Transverse colon (tissue), 4 donors: ENCODE measurements at regions of chr11 and their contacts with region 1.

Region 1: DNA sequence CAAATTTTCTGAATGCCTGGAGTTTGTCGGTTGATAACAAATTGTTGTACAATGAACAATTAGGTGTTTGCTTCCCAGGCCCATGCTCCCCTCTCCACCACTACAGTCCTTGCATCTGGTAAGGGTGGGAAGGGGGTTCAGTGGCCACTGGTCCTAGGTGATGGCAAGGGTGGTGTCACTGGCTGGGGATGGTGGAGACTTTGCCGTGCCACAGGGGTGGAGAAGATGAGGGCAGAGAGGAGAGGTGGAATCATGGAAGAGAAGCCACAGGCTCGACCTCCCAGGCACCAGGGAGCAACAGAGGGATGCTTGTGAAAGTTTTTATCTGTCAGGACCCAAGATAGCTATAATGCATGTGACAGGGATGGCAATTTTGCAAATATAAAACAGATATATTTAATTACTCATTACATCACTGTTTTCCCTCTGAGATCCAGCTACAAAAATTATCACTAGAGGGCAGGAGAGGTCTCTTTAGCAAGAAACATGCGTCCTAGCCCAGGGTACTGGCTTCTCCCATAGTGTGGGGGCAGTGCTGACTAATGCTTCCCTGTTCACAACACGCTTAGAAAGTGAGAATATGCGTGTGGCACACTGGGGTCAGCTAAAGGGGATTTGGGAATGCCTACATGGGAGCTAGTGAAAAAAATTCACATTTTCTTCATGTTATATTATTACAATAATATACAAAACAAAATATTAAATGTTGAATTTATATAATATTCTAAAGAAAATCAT is 49.0 kb upstream of the AMPD3 start:
- DNase-seq: peak; percentile 58
- H3K4me3 ChIP-seq: no peak overlapping the region
- H3K27ac ChIP-seq: no peak overlapping the region
- H3K4me1 ChIP-seq: peaks cover 0 to 12% (median 2%) of the 10 kb centered on the region in 4 donors
- H3K27me3 ChIP-seq: no peaks in the 10 kb centered on the region
- CTCF ChIP-seq: peak; percentile 60 to 74 (median 69)
- EP300 ChIP-seq: no peak
- POLR2A ChIP-seq: no peak

Region 2: GRCh38 chr11:10653926-10654810 is 248.1 kb after region 1 on chr11:
- in situ Hi-C with region 1: loop called in 1 of 4 experiments (anchors 10 kb)
- intact Hi-C with region 1: no loop called
- DNase-seq: no peak
- H3K4me3 ChIP-seq: no peak overlapping the region
- H3K27ac ChIP-seq: peak overlapping the region; percentile 77 to 89 (median 83)
- H3K4me1 ChIP-seq: peaks cover 31 to 64% (median 44%) of the 10 kb centered on the region in 4 donors
- H3K27me3 ChIP-seq: no peaks in the 10 kb centered on the region
- CTCF ChIP-seq: peak; percentile 64 to 70 (median 66)
- EP300 ChIP-seq: no peak
- POLR2A ChIP-seq: no peak

Region 3: GRCh38 chr11:10659339-10660216 is 253.6 kb after region 1 on chr11:
- in situ Hi-C with region 1: loop called in 2 of 4 experiments (anchors 10 kb)
- intact Hi-C with region 1: no loop called
- DNase-seq: peak; percentile 37
- H3K4me3 ChIP-seq: no peak overlapping the region
- H3K27ac ChIP-seq: peak overlapping the region; percentile 77 to 89 (median 83)
- H3K4me1 ChIP-seq: peaks cover 32 to 68% (median 45%) of the 10 kb centered on the region in 4 donors
- H3K27me3 ChIP-seq: no peaks in the 10 kb centered on the region
- CTCF ChIP-seq: no peak
- EP300 ChIP-seq: no peak
- POLR2A ChIP-seq: no peak

Region 4: DNA sequence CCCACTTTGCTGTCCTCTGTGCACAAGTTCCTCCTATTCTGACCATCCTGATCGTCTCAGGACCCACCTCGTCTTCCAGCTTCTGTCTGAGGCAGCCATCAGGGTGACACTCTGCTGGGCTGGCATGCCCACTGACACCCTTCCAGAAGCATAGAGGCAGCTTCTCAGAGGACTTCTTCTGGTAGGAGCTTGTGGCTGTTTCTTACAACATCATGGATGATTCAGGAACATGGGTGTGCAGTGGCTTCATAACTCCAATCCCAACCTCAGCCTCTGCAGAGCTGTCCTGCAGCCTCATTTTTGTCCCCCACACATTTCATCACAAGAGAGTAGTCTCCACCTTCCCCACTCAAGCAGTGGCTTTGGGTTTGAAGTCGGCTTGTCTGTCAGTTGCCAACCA is 324.1 kb after region 1 on chr11:
- in situ Hi-C with region 1: loop called (anchors 5 to 10 kb)
- intact Hi-C with region 1: no loop called
- DNase-seq: no peak
- H3K4me3 ChIP-seq: no peak overlapping the region
- H3K27ac ChIP-seq: no peak overlapping the region
- H3K4me1 ChIP-seq: peaks cover under 1 to 11% (median 5%) of the 10 kb centered on the region in 4 donors
- H3K27me3 ChIP-seq: no peaks in the 10 kb centered on the region
- CTCF ChIP-seq: no peak
- EP300 ChIP-seq: no peak
- POLR2A ChIP-seq: no peak

Region 5: GRCh38 chr11:10920205-10920604 is 514.2 kb after region 1 on chr11:
- in situ Hi-C with region 1: no loop called
- intact Hi-C with region 1: no loop called
- DNase-seq: no peak
- H3K4me3 ChIP-seq: no peak overlapping the region
- H3K27ac ChIP-seq: no peak overlapping the region
- H3K4me1 ChIP-seq: peaks cover 0 to under 1% (median 0%) of the 10 kb centered on the region in 4 donors
- H3K27me3 ChIP-seq: no peaks in the 10 kb centered on the region
- CTCF ChIP-seq: no peak
- EP300 ChIP-seq: no peak
- POLR2A ChIP-seq: no peak